Esophagus muscularis mucosa (tissue), 4 donors: ENCODE measurements at regions of chr5 and their contacts with region 1.

Region 1: GRCh38 chr5:54415896-54416601 is 39.5 kb upstream of the HSPB3 start:
- DNase-seq: no peak
- H3K4me3 ChIP-seq: no peak overlapping the region
- H3K27ac ChIP-seq: no peak overlapping the region
- H3K4me1 ChIP-seq: peaks cover 0 to 3% (median 0%) of the 10 kb centered on the region in 4 donors
- H3K27me3 ChIP-seq: no peaks in the 10 kb centered on the region
- CTCF ChIP-seq: no peak
- EP300 ChIP-seq: no peak
- POLR2A ChIP-seq: no peak

Region 2: GRCh38 chr5:54243473-54244080 is 172.5 kb before region 1 on chr5:
- intact Hi-C with region 1: loop called (anchors 5 kb)
- DNase-seq: no peak
- H3K4me3 ChIP-seq: no peak overlapping the region
- H3K27ac ChIP-seq: no peak overlapping the region
- H3K4me1 ChIP-seq: peaks cover 0 to 7% (median 0%) of the 10 kb centered on the region in 4 donors
- H3K27me3 ChIP-seq: no peaks in the 10 kb centered on the region
- CTCF ChIP-seq: peak; percentile 51 to 65 (median 52)
- EP300 ChIP-seq: no peak
- POLR2A ChIP-seq: no peak

Region 3: DNA sequence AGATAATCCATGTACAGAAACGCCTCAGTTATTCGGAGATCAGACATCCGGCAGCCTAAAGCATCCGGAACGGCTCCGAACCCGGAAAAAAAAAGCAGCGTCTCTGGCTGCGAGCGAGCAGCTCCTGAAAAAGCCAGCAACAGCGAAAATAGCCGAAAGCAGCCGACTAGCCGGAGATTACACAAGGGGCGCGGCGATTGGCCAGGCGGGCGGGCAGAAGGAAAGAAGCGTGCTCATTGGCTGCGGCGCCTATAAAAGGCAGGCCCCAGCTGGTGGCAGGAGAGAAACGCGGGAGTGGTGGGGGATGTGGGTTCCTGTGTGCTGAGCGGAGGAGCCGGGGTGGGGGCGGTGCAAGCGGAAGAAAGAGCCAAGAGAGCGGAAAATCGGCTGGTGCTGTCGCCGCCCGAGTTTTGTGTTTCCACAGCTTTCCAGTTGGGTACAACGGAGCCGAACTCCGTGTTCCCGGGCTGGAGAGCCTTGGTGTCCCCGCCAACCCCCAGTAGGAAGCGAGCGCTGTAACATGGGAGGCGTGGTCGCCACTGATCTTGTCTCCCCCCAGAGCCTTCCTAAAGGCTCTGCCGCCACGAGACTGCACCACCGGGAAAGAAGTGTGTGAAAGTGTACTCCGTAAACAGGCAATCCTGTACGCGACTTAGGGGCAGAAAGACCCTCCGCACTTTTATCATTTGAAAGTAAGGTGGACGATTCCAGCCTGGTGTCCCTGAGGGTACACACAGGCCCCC is 105.4 kb before region 1 on chr5 and contains the start of gene ARL15:
- intact Hi-C with region 1: loop called (anchors 5 kb)
- DNase-seq: peak; percentile 100
- H3K4me3 ChIP-seq: peak within 1 kb of the TSS; percentile 84 to 93 (median 90)
- H3K27ac ChIP-seq: peak within 1 kb of the TSS; percentile 84 to 90 (median 90)
- H3K4me1 ChIP-seq: peaks cover 7 to 35% (median 26%) of the 10 kb centered on the region in 4 donors
- H3K27me3 ChIP-seq: no peaks in the 10 kb centered on the region
- CTCF ChIP-seq: no peak
- EP300 ChIP-seq: no peak
- POLR2A ChIP-seq: peak; percentile 96
- total RNA-seq, gene ARL15: 11.6 to 21.6 (median 16.5) TPM

Region 4: DNA sequence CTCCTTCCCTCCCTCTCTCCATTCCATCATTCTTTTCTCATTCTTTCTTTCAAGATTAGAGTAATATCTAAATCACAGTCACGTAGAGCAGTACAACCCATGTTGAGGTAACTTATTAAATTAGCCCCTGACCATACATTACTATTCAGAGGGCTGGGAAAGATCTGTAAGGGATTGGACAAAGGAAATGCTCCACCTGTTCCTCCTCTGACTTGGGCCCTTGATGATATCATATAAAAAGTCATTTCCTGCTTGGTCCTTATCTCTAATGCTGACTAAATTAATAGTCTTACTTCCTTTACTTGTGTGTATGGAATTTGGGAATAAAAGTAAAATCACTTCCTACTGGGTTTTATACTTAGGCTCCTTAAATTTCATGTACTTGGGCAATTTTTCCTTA is 142.3 kb after region 1 on chr5:
- intact Hi-C with region 1: no loop called
- DNase-seq: no peak
- H3K4me3 ChIP-seq: no peak overlapping the region
- H3K27ac ChIP-seq: no peak overlapping the region
- H3K4me1 ChIP-seq: no peaks in the 10 kb centered on the region
- H3K27me3 ChIP-seq: no peaks in the 10 kb centered on the region
- CTCF ChIP-seq: no peak
- EP300 ChIP-seq: no peak
- POLR2A ChIP-seq: no peak